ENCODE measurements at regions of chr19 and their contacts with region 1.

Region 1: DNA sequence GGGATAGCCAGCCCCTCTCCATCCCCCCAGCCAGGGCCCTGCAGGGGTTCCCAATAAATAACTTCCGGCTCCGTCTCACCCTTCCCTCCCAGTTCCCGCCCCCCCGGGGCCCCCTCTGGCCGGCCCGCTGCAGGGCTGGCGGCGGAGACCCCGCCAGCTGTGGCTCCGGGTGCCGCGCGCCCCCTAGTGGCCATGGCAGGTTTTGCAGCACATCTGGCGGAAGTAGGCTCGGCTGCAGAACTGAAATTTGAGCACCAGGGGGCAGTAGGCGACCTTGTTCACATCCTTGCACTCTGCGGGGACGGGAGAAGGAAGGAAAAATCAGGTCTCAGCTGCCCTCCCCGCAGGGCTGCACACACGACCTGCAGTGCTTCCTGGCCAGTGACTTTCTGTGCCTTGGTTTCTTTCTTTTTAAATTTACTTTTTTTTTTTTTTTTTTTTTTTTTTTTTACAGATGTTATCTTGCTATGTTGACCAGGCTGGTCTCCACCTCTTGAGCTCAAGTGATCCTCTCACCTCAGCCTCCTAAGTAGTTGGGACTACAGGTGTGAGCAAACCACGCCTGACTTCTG is 3.6 kb upstream of the MYO1F start:
- H3K4me3 Mint-ChIP-seq: no peak overlapping the region
- H3K27ac Mint-ChIP-seq: no peak overlapping the region
- H3K4me1 Mint-ChIP-seq: peaks cover 36% of the 10 kb centered on the region
- H3K27me3 Mint-ChIP-seq: no peaks in the 10 kb centered on the region

Region 2: DNA sequence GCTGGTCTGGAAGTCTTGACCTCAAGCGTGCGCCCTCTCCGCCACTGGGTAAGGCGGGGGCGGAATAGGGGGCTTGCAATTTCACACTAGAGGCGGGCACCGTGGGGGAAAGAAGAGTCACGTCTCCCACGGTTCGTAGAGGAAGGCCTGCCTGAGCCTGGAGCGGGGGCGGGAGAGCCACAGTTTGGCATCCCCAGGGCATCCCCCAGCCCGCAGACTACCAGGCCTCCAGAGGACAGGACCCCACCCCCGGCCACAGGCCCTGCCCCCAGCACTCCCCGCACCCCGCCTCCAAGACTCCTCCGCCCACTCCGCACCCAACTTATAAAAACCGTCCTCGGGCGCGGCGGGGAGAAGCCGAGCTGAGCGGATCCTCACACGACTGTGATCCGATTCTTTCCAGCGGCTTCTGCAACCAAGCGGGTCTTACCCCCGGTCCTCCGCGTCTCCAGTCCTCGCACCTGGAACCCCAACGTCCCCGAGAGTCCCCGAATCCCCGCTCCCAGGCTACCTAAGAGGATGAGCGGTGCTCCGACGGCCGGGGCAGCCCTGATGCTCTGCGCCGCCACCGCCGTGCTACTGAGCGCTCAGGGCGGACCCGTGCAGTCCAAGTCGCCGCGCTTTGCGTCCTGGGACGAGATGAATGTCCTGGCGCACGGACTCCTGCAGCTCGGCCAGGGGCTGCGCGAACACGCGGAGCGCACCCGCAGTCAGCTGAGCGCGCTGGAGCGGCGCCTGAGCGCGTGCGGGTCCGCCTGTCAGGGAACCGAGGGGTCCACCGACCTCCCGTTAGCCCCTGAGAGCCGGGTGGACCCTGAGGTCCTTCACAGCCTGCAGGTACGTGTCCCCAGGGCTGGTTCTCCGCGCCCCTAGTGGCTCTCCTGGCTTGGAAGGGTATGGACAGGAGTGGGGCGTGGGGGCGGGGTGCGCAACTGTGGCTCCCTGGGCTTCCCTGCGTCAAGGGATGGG is 216.7 kb before region 1 on chr19 and contains the start of gene ANGPTL4:
- intact Hi-C with region 1: loop called (anchors 5 kb)
- H3K4me3 Mint-ChIP-seq: peak within 1 kb of the TSS; percentile 76
- H3K27ac Mint-ChIP-seq: peak within 1 kb of the TSS; percentile 92
- H3K4me1 Mint-ChIP-seq: peaks cover 66% of the 10 kb centered on the region
- H3K27me3 Mint-ChIP-seq: peaks cover 66% of the 10 kb centered on the region

Region 3: GRCh38 chr19:8526345-8527067 is 54.3 kb before region 1 on chr19:
- intact Hi-C with region 1: no loop called
- H3K4me3 Mint-ChIP-seq: no peak overlapping the region
- H3K27ac Mint-ChIP-seq: no peak overlapping the region
- H3K4me1 Mint-ChIP-seq: peaks cover 22% of the 10 kb centered on the region
- H3K27me3 Mint-ChIP-seq: no peaks in the 10 kb centered on the region

Region 4: DNA sequence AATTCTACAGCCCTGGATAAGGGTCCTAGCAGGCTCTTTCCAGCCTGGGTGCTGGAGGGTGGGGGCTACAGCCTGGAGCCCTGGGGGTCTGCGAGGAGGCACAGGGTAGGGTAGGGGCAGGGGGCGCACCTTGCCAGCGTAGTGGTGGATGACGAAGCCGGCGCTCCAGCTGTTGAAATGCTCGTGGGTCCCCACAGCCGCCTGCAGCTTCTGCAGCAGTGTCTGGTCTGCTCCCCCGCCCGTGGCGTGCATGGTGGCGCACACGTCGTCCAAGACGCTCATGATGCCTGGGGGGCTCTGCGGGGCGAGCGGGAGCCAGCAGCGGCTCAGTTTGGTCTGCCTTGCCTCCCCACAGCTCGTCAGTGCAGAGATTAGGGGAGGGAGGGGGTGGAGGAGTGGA is 36.6 kb before region 1 on chr19:
- intact Hi-C with region 1: loop called (anchors 5 kb)
- H3K4me3 Mint-ChIP-seq: no peak overlapping the region
- H3K27ac Mint-ChIP-seq: no peak overlapping the region
- H3K4me1 Mint-ChIP-seq: peaks cover 39% of the 10 kb centered on the region
- H3K27me3 Mint-ChIP-seq: no peaks in the 10 kb centered on the region

Region 5: DNA sequence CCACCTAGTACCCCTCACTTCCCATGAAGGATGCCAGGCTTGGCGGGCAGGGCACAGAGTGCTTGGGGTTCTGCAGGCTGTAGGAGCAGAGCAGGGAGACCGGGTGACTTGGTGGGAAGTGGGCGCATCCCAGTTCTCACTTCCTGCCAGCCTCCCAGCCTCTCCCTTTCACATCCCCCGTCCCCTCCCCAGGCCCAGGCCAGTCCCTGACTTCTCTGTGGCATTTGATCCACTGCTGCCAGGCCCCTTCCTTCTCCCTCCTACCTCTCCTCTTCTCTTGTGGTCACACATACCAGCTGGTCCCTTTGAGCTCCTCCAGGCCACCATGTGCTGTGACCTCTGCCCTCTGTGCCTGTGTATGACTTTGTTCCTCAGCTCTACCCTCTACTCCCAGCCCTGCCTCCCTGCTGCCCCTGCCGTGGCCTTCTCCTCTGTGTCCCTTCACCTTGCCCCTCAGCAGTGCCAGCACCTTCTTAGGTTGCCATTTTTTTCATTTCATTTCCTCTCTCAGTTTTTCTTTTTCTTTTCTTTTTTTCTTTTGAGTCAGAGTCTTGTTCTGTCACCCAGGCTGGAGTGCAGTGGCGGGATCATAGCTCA is 23.1 kb before region 1 on chr19:
- intact Hi-C with region 1: loop called (anchors 2 kb)
- H3K4me3 Mint-ChIP-seq: peak overlapping the region; percentile 51
- H3K27ac Mint-ChIP-seq: peak overlapping the region; percentile 80
- H3K4me1 Mint-ChIP-seq: peaks cover 86% of the 10 kb centered on the region
- H3K27me3 Mint-ChIP-seq: no peaks in the 10 kb centered on the region

Region 6: DNA sequence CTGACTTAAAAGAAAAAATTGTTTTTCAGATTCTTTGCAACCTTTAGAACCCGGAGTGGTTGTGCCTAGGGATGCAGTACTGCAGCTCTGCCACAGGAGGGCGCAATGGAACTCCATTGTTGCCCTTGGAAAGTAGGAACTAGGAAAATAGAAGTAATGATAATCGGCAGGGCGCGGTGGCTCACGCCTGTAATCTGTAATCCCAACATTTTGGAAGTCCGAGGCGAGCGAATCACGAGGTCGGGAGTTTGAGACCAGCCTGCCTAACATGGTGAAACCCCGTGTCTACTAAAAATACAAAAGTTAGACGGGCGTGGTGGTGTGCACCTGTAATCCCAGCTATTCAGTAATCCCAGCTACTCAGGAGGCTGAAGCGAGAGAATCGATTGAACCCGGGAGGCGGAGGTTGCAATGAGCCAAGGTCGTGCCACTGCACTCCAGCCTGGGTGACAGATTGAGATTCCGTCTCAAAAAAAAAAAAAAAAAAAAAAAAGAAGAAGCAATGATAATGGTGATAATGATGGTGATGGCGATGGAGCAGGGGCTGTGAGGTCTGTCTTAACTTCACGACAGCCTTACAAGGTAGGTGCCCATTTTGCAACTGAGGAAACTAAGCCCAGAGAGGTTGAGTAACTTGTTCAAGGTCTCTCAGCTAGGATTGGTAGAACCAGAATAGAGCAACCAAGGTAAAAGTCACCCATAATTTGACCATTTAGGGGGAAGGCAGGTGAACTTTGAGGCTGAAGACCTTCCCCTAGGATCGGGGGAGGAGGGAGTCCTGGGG is 35.2 kb after region 1 on chr19:
- intact Hi-C with region 1: no loop called
- H3K4me3 Mint-ChIP-seq: no peak overlapping the region
- H3K27ac Mint-ChIP-seq: no peak overlapping the region
- H3K4me1 Mint-ChIP-seq: no peaks in the 10 kb centered on the region
- H3K27me3 Mint-ChIP-seq: peaks cover 34% of the 10 kb centered on the region

Region 7: GRCh38 chr19:8626842-8627241 is 46.0 kb after region 1 on chr19:
- intact Hi-C with region 1: no loop called
- H3K4me3 Mint-ChIP-seq: no peak overlapping the region
- H3K27ac Mint-ChIP-seq: no peak overlapping the region
- H3K4me1 Mint-ChIP-seq: no peaks in the 10 kb centered on the region
- H3K27me3 Mint-ChIP-seq: peaks cover 3% of the 10 kb centered on the region

Region 8: GRCh38 chr19:8697671-8698432 is 117.1 kb after region 1 on chr19:
- intact Hi-C with region 1: loop called (anchors 1 kb)
- H3K4me3 Mint-ChIP-seq: no peak overlapping the region
- H3K27ac Mint-ChIP-seq: no peak overlapping the region
- H3K4me1 Mint-ChIP-seq: peaks cover 8% of the 10 kb centered on the region
- H3K27me3 Mint-ChIP-seq: peaks cover 66% of the 10 kb centered on the region

Measured in dendritic cell treated with granulocyte-macrophage colony-stimulating factor and Interleukin-4, amounts not matched to agents 40 ng/mL and 50 ng/mL, for 4 days (primary cell).